Activated T-helper 1 cell treated with anti-CD3 and anti-CD28 coated beads, Interleukin-12 subunit alpha, Interleukin-12 subunit beta, Interleukin-2, Interleukin-4 antibody, amounts not matched to agents 30 ng/mL and 10 ng/mL and 1 ng/mL, durations not matched to agents 14 hours and 24 hours and 36 hours (primary cell): ENCODE measurements at regions of chr2 and their contacts with region 1.

Region 1: GRCh38 chr2:111209045-111209514 is 88.4 kb downstream of the BCL2L11 start:
- DNase-seq: peak; percentile 62
- H3K4me3 Mint-ChIP-seq: peak overlapping the region; percentile 39
- H3K27ac Mint-ChIP-seq: peak overlapping the region; percentile 73
- H3K4me1 Mint-ChIP-seq: peaks cover 42% of the 10 kb centered on the region
- H3K27me3 Mint-ChIP-seq: peaks cover 8% of the 10 kb centered on the region

Region 2: DNA sequence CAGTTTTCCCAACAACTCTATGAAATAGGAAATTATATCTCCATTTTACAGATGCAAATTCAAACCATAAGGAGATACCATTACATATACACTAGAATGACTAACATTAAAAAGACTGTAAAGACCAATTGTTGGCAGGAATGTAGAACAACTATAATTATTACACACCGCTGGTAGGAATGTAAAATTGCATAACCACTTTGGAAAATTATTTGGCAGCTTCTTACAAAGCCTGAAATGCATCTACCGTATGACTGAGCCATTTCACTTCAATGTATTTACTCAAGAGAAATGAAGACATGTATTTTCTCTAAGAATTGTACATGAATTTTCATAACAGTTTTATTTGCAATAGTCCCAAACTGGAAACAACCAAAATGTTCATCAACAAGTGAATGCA is 277.4 kb before region 1 on chr2:
- intact Hi-C with region 1: no loop called
- DNase-seq: no peak
- H3K4me3 Mint-ChIP-seq: no peak overlapping the region
- H3K27ac Mint-ChIP-seq: no peak overlapping the region
- H3K4me1 Mint-ChIP-seq: no peaks in the 10 kb centered on the region
- H3K27me3 Mint-ChIP-seq: peaks cover 8% of the 10 kb centered on the region

Region 3: GRCh38 chr2:111054791-111055691 is 154.0 kb before region 1 on chr2:
- intact Hi-C with region 1: loop called (anchors 1 kb)
- DNase-seq: no peak
- H3K4me3 Mint-ChIP-seq: no peak overlapping the region
- H3K27ac Mint-ChIP-seq: peak overlapping the region; percentile 80
- H3K4me1 Mint-ChIP-seq: peaks cover 41% of the 10 kb centered on the region
- H3K27me3 Mint-ChIP-seq: peaks cover 18% of the 10 kb centered on the region

Region 4: GRCh38 chr2:111135910-111136297 is 73.2 kb before region 1 on chr2:
- intact Hi-C with region 1: no loop called
- DNase-seq: no peak
- H3K4me3 Mint-ChIP-seq: no peak overlapping the region
- H3K27ac Mint-ChIP-seq: no peak overlapping the region
- H3K4me1 Mint-ChIP-seq: peaks cover 79% of the 10 kb centered on the region
- H3K27me3 Mint-ChIP-seq: no peaks in the 10 kb centered on the region

Region 5: GRCh38 chr2:111185638-111186022 is 23.4 kb before region 1 on chr2:
- intact Hi-C with region 1: no loop called
- DNase-seq: no peak
- H3K4me3 Mint-ChIP-seq: no peak overlapping the region
- H3K27ac Mint-ChIP-seq: no peak overlapping the region
- H3K4me1 Mint-ChIP-seq: peaks cover 17% of the 10 kb centered on the region
- H3K27me3 Mint-ChIP-seq: peaks cover 23% of the 10 kb centered on the region

Region 6: DNA sequence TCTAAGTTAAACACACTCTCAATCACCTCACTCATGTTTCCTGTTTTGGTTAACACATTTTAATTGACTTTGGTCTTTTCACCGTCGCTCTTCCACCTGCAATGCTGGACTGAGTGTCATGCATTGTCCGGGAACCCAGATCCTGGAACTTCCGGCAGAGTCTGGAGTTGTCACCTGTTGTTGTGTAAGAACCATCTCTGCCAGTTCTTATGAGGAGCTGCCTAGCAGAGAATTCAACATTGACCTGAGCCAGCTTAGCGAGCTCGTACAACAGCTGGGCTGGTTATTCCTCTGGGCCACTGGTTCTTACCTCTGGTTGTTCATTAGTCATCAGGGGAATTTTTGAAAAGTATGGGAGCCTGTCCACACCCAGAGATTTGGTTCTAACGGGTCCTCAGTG is 12.6 kb before region 1 on chr2:
- intact Hi-C with region 1: loop called (anchors 1 kb)
- DNase-seq: no peak
- H3K4me3 Mint-ChIP-seq: no peak overlapping the region
- H3K27ac Mint-ChIP-seq: no peak overlapping the region
- H3K4me1 Mint-ChIP-seq: peaks cover 28% of the 10 kb centered on the region
- H3K27me3 Mint-ChIP-seq: peaks cover 30% of the 10 kb centered on the region

Region 7: DNA sequence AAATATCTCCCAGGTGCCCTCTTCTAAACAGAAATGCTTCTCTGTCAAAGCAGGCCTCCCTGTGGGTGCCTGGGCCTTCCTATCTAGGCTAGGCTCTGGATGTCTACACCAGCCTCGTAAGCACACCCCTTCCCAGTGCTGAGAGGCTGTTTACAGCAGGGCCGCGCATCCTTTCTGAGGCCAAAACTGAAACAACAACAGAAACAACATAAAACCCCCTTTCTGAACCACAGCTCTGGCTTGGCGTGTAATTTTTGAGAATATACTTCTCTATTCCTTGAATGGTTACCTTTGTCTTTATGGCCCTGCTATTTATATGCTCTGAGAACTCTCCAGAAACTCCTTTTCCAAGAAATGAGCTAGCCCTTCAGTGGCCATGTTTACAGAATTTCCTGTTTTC is 30.0 kb after region 1 on chr2:
- intact Hi-C with region 1: loop called (anchors 1 kb)
- DNase-seq: peak; percentile 60
- H3K4me3 Mint-ChIP-seq: peak overlapping the region; percentile 60
- H3K27ac Mint-ChIP-seq: peak overlapping the region; percentile 93
- H3K4me1 Mint-ChIP-seq: peaks cover 48% of the 10 kb centered on the region
- H3K27me3 Mint-ChIP-seq: peaks cover 6% of the 10 kb centered on the region